MCF 10A (cell line): ENCODE measurements at regions of chr10 and their contacts with region 1.

Region 1: GRCh38 chr10:122435212-122435827 is 19.1 kb upstream of the ARMS2 start:
- DNase-seq: peak; percentile 55
- H3K4me3 Mint-ChIP-seq: no peak overlapping the region
- H3K27ac Mint-ChIP-seq: no peak overlapping the region
- H3K4me1 Mint-ChIP-seq: no peaks in the 10 kb centered on the region
- H3K27me3 Mint-ChIP-seq: no peaks in the 10 kb centered on the region
- CTCF ChIP-seq: peak; percentile 51

Region 2: GRCh38 chr10:122267849-122268737 is 167.2 kb before region 1 on chr10:
- CTCF ChIA-PET with region 1: interaction called, 10 read pairs
- POLR2A ChIA-PET with region 1: no interaction called
- intact Hi-C with region 1: no loop called
- DNase-seq: peak; percentile 49
- H3K4me3 Mint-ChIP-seq: no peak overlapping the region
- H3K27ac Mint-ChIP-seq: no peak overlapping the region
- H3K4me1 Mint-ChIP-seq: peaks cover 32% of the 10 kb centered on the region
- H3K27me3 Mint-ChIP-seq: no peaks in the 10 kb centered on the region
- CTCF ChIP-seq: peak; percentile 82

Region 3: DNA sequence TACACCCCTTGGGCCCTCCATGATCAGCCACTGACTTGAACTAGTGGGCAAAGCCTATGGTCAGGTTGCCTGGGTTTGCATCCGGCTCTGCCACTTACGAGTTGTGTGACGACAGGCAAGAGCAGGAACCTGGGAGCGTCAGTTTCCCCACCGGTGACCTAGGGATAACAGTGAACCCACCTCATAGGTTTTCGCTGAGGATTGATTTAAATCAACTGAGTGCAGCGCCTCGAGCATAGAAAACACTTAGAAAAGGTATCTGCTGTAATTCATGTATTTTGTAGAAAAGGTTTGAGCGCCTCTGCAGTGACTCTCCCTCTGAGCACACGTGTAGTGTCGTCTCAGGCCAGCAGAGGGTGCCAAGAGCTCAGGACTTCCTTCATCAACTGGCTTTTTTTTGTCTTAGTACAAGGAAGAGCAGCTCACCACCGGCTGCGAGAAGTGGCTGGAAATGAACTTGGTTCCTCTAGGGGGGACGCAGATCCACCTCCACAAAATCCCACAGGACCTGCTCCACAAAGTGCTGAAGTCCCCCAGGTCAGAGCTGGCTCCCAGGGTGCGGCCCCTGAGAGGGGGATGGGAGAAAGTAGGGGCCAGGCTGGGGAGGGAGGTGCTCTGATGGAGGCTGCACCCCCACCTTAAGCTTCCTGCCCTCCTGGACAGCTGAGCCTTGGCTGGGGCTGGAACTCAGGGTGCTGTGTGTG is 136.6 kb before region 1 on chr10:
- CTCF ChIA-PET with region 1: interaction called, 86 read pairs
- POLR2A ChIA-PET with region 1: interaction called, 7 read pairs
- intact Hi-C with region 1: loop called (anchors 1 kb)
- DNase-seq: peak; percentile 86
- H3K4me3 Mint-ChIP-seq: no peak overlapping the region
- H3K27ac Mint-ChIP-seq: no peak overlapping the region
- H3K4me1 Mint-ChIP-seq: peaks cover 38% of the 10 kb centered on the region
- H3K27me3 Mint-ChIP-seq: no peaks in the 10 kb centered on the region
- CTCF ChIP-seq: peak; percentile 82

Region 4: GRCh38 chr10:122307669-122308486 is 127.4 kb before region 1 on chr10:
- CTCF ChIA-PET with region 1: interaction called, 19 read pairs
- POLR2A ChIA-PET with region 1: interaction called, 6 read pairs
- intact Hi-C with region 1: no loop called
- DNase-seq: peak; percentile 98
- H3K4me3 Mint-ChIP-seq: peak overlapping the region; percentile 64
- H3K27ac Mint-ChIP-seq: peak overlapping the region; percentile 94
- H3K4me1 Mint-ChIP-seq: peaks cover 22% of the 10 kb centered on the region
- H3K27me3 Mint-ChIP-seq: no peaks in the 10 kb centered on the region
- CTCF ChIP-seq: no peak

Region 5: GRCh38 chr10:122342293-122343134 is 92.8 kb before region 1 on chr10:
- CTCF ChIA-PET with region 1: interaction called, 45 read pairs
- POLR2A ChIA-PET with region 1: interaction called, 5 read pairs
- intact Hi-C with region 1: loop called (anchors 1 kb)
- DNase-seq: peak; percentile 72
- H3K4me3 Mint-ChIP-seq: no peak overlapping the region
- H3K27ac Mint-ChIP-seq: no peak overlapping the region
- H3K4me1 Mint-ChIP-seq: peaks cover 12% of the 10 kb centered on the region
- H3K27me3 Mint-ChIP-seq: no peaks in the 10 kb centered on the region
- CTCF ChIP-seq: peak; percentile 54

Region 6: DNA sequence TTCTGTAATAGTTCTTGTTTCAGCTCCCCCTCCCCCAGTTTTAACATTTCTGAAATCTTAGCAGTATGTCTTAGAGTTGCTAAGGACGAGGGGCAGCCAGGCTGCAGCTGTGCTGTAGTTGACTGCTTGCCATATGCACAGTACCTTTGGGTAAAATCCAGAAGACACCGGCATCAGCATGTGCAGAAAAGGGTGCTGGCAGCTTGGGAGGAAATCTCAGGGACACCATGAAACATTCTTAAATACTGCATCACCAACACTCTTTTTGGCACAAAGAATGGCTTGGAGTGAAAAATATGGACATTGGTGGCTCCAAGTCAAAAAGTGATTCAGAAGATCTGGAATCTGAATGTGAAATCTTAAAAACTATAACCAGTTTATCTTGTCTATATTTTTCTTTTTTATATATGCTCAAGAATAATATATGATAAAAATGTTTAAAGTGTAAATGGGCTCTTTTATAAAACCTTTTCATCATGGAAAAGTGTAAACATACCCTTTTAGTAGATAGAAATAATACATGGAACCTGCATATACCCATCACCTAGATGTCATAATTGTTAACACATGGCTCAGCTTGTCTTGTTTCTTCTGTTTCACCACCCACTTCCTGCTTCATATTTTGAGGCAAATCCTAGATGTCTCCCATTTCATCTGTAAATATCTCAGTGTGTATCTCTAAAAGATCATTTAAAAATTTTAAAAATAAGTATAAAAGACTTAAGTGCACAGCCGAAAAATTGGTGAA is 15.3 kb before region 1 on chr10:
- CTCF ChIA-PET with region 1: interaction called, 24 read pairs
- POLR2A ChIA-PET with region 1: no interaction called
- intact Hi-C with region 1: no loop called
- DNase-seq: peak; percentile 81
- H3K4me3 Mint-ChIP-seq: peak overlapping the region; percentile 52
- H3K27ac Mint-ChIP-seq: peak overlapping the region; percentile 91
- H3K4me1 Mint-ChIP-seq: peaks cover 44% of the 10 kb centered on the region
- H3K27me3 Mint-ChIP-seq: no peaks in the 10 kb centered on the region
- CTCF ChIP-seq: no peak

Region 7: DNA sequence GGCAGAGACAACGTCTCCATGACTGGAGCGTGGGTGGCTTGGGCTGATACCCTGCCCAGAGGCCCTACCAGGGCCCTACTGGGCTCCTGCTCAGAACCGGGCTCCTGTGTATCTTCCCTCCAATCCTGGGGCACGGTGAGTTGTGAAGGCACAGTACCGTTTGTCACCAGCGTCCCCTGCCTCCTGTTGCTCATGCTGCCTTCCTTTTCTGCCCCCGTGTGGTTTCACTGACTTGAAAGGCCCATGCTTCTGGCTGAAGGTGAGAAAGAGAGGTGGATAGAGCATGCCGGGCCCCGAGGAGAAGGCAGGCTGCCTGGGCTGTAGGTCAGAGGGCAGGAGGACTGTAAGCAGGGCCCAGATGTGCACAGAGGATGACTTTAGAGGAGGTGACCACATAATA is 116.1 kb after region 1 on chr10:
- CTCF ChIA-PET with region 1: no interaction called
- POLR2A ChIA-PET with region 1: no interaction called
- intact Hi-C with region 1: no loop called
- DNase-seq: no peak
- H3K4me3 Mint-ChIP-seq: no peak overlapping the region
- H3K27ac Mint-ChIP-seq: no peak overlapping the region
- H3K4me1 Mint-ChIP-seq: peaks cover 6% of the 10 kb centered on the region
- H3K27me3 Mint-ChIP-seq: no peaks in the 10 kb centered on the region
- CTCF ChIP-seq: no peak